Aorta (tissue), 5 donors: ENCODE measurements at regions of chr14 and their contacts with region 1.

Region 1: GRCh38 chr14:20530771-20531571 is 25.6 kb downstream of the RNASE10 start:
- DNase-seq: peak; percentile 81 to 87
- ATAC-seq: no peak
- H3K4me3 ChIP-seq: no peak overlapping the region
- H3K27ac ChIP-seq: no peak overlapping the region
- H3K4me1 ChIP-seq: no peaks in the 10 kb centered on the region
- H3K27me3 ChIP-seq: no peaks in the 10 kb centered on the region

Region 2: GRCh38 chr14:20690848-20691523 is 160.0 kb after region 1 on chr14:
- intact Hi-C with region 1: loop called (anchors 5 to 10 kb)
- DNase-seq: no peak
- ATAC-seq: peak; percentile 88
- H3K4me3 ChIP-seq: no peak overlapping the region
- H3K27ac ChIP-seq: no peak overlapping the region
- H3K4me1 ChIP-seq: peaks cover 0 to 1% of the 10 kb centered on the region in 2 donors
- H3K27me3 ChIP-seq: no peaks in the 10 kb centered on the region